ENCODE measurements at regions of chr3 and their contacts with region 1.

Region 1: DNA sequence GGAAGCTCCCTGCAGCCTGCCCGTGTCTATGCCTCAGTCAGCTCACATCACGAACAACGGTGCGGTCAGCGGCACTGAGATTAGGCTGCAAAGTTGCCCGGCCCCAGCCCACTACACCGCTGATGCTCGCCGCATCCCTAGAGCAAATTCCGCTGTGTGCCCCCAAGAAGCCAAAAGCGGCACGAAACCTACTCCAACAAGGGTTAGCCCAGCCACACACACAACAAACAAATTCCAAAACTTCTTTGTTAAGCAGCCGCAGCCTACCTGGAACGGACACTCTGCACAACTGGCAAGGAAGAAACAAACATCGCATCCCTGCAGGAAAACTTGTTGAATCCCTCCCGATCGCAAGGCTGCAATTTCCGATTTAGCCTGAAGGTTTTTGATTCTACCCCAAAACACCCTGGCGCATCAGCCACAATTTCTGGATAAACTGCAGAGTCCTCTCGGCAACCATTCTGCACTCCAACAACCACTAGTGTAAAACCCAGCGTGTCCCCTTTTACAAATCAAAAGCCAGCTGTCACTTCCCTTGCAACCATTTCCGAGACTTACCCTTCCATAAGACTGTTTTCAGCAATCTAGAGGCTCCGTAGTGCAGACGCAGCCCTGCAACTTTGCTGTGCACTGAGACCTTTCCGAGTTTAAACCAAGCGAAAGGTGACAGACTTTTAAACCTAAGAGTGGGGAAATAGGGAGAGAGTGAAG is 449 bp downstream of the ROBO1 start:
- ATAC-seq: peak in 6 of 8 experiments; percentile 56 to 65 (median 60)
- H3K4me3 ChIP-seq: peak overlapping the region; percentile 40 to 57 (median 51)
- H3K27ac ChIP-seq: no peak overlapping the region
- H3K4me1 ChIP-seq: peaks cover 7 to 22% of the 10 kb centered on the region in 2 donors

Region 2: GRCh38 chr3:79534727-79535126 is 232.6 kb before region 1 on chr3:
- in situ Hi-C with region 1: loop called in 1 of 9 experiments (anchors 25 kb)
- ATAC-seq: peak in 5 of 8 experiments; percentile 72 to 85 (median 80)
- H3K4me3 ChIP-seq: no peak overlapping the region
- H3K27ac ChIP-seq: no peak overlapping the region
- H3K4me1 ChIP-seq: peaks cover 14 to 20% of the 10 kb centered on the region in 2 donors